CD4-positive, alpha-beta memory T cell (primary cell): ENCODE measurements at regions of chr7 and their contacts with region 1.

Region 1: DNA sequence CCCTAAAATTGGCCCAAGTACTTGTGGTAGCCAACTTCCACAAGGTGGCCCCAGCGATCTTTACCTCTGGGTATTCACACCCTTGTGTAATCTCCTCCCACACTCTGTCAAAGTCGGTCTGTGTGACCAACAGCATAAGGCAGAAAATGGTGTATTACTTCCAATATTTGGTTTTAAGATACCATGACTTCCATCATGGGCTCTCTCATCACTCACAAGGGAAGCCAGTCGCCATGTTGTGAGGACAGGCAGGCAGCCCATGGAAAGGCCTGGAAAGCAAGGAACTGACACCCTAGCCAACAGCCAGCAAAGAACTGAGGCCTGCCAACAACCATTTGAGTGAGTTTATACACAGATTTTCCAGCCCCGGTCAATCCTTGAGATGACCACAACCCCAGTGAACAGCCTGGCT is 91.0 kb upstream of the KMT2E start:
- DNase-seq: peak; percentile 63 to 79 (median 67)
- H3K4me3 ChIP-seq: no peak overlapping the region
- H3K4me3 Mint-ChIP-seq: no peak overlapping the region
- H3K27ac ChIP-seq: no peak overlapping the region
- H3K27ac Mint-ChIP-seq: peak overlapping the region in 5 of 7 donors; percentile 42 to 83 (median 62)
- H3K4me1 ChIP-seq: peaks cover 6% of the 10 kb centered on the region
- H3K4me1 Mint-ChIP-seq: peaks cover 0 to 6% (median 4%) of the 10 kb centered on the region in 4 donors
- H3K27me3 ChIP-seq: no peaks in the 10 kb centered on the region
- H3K27me3 Mint-ChIP-seq: no peaks in the 10 kb centered on the region

Region 2: GRCh38 chr7:104231054-104232046 is 691.7 kb before region 1 on chr7:
- CTCF ChIA-PET with region 1: interaction called, 28 read pairs
- POLR2A ChIA-PET with region 1: no interaction called
- intact Hi-C with region 1: no loop called
- DNase-seq: peak; percentile 33 to 37 (median 34)
- H3K4me3 ChIP-seq: no peak overlapping the region
- H3K4me3 Mint-ChIP-seq: no peak overlapping the region
- H3K27ac ChIP-seq: no peak overlapping the region
- H3K27ac Mint-ChIP-seq: no peak overlapping the region
- H3K4me1 ChIP-seq: no peaks in the 10 kb centered on the region
- H3K4me1 Mint-ChIP-seq: peaks cover 0 to 5% (median 4%) of the 10 kb centered on the region in 4 donors
- H3K27me3 ChIP-seq: no peaks in the 10 kb centered on the region
- H3K27me3 Mint-ChIP-seq: peaks cover 7 to 18% of the 10 kb centered on the region in 2 donors

Region 3: GRCh38 chr7:104883718-104884452 is 39.1 kb before region 1 on chr7:
- CTCF ChIA-PET with region 1: interaction called, 339 read pairs
- POLR2A ChIA-PET with region 1: interaction called, 3 read pairs
- intact Hi-C with region 1: loop called (anchors 1 kb)
- DNase-seq: peak; percentile 56 to 69 (median 60)
- H3K4me3 ChIP-seq: no peak overlapping the region
- H3K4me3 Mint-ChIP-seq: peak overlapping the region in 1 of 8 donors; percentile 35
- H3K27ac ChIP-seq: no peak overlapping the region
- H3K27ac Mint-ChIP-seq: peak overlapping the region in 3 of 7 donors; percentile 5 to 72 (median 23)
- H3K4me1 ChIP-seq: peaks cover 3% of the 10 kb centered on the region
- H3K4me1 Mint-ChIP-seq: peaks cover 0 to 10% (median 7%) of the 10 kb centered on the region in 4 donors
- H3K27me3 ChIP-seq: no peaks in the 10 kb centered on the region
- H3K27me3 Mint-ChIP-seq: peaks cover 0 to 3% of the 10 kb centered on the region in 2 donors

Region 4: GRCh38 chr7:105046414-105046813 is 123.4 kb after region 1 on chr7:
- CTCF ChIA-PET with region 1: interaction called, 4 read pairs
- POLR2A ChIA-PET with region 1: no interaction called
- intact Hi-C with region 1: loop called (anchors 1 kb)
- DNase-seq: no peak
- H3K4me3 ChIP-seq: no peak overlapping the region
- H3K4me3 Mint-ChIP-seq: no peak overlapping the region
- H3K27ac ChIP-seq: no peak overlapping the region
- H3K27ac Mint-ChIP-seq: peak overlapping the region in 3 of 7 donors; percentile 10 to 74 (median 70)
- H3K4me1 ChIP-seq: peaks cover 44% of the 10 kb centered on the region
- H3K4me1 Mint-ChIP-seq: peaks cover 42 to 64% (median 54%) of the 10 kb centered on the region in 4 donors
- H3K27me3 ChIP-seq: no peaks in the 10 kb centered on the region
- H3K27me3 Mint-ChIP-seq: no peaks in the 10 kb centered on the region

Region 5: GRCh38 chr7:105079348-105079747 is 156.3 kb after region 1 on chr7:
- CTCF ChIA-PET with region 1: no interaction called
- POLR2A ChIA-PET with region 1: no interaction called
- intact Hi-C with region 1: no loop called
- DNase-seq: no peak
- H3K4me3 ChIP-seq: no peak overlapping the region
- H3K4me3 Mint-ChIP-seq: no peak overlapping the region
- H3K27ac ChIP-seq: no peak overlapping the region
- H3K27ac Mint-ChIP-seq: no peak overlapping the region
- H3K4me1 ChIP-seq: no peaks in the 10 kb centered on the region
- H3K4me1 Mint-ChIP-seq: peaks cover 4 to 17% (median 8%) of the 10 kb centered on the region in 4 donors
- H3K27me3 ChIP-seq: no peaks in the 10 kb centered on the region
- H3K27me3 Mint-ChIP-seq: no peaks in the 10 kb centered on the region

Region 6: DNA sequence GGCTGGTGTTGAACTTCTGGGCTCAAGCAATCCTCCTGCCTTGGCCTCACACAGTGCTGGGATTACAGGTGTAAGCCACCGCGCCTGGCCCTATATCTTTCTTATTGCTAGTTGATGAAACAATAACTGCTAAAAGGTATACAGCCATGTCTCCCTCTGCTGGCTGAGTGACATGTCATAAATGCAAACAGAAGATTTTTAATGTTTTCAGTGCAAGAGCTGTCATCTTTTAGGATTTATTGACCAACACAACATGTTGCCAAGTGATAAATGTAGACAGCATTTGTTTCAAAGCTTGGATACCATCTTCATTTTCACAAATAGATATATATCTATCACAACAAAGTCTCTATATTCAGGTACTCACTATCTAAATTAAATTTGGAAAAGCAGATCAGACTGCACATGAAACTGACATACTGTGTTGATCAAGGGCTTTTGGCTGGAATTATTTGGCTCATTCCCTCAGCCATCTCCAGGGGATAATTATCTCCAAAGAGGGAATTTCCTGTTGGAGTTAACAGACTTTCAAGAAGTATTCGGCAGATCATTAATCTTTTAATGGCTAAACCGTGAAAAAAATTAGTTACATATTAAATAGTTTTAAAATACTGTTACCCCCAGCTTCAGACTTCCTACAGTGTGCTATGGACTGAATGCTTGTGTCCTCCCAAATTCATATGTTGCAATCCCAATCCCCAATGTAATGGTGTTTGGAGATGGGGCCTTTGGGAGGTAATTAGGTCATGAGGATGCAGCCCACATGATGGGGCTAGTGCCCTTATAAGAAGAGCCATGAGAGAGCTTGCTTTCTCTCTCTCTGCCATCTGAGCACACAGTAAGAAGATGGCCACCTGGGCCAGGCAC is 507.0 kb after region 1 on chr7:
- CTCF ChIA-PET with region 1: interaction called, 5 read pairs
- POLR2A ChIA-PET with region 1: no interaction called
- intact Hi-C with region 1: loop called (anchors 1 kb)
- DNase-seq: peak; percentile 49 to 58 (median 56)
- H3K4me3 ChIP-seq: no peak overlapping the region
- H3K4me3 Mint-ChIP-seq: no peak overlapping the region
- H3K27ac ChIP-seq: no peak overlapping the region
- H3K27ac Mint-ChIP-seq: peak overlapping the region in 2 of 7 donors; percentile 22 to 46
- H3K4me1 ChIP-seq: peaks cover 5% of the 10 kb centered on the region
- H3K4me1 Mint-ChIP-seq: peaks cover 3 to 8% (median 4%) of the 10 kb centered on the region in 4 donors
- H3K27me3 ChIP-seq: no peaks in the 10 kb centered on the region
- H3K27me3 Mint-ChIP-seq: no peaks in the 10 kb centered on the region

Region 7: GRCh38 chr7:105589356-105590077 is 666.5 kb after region 1 on chr7:
- CTCF ChIA-PET with region 1: no interaction called
- POLR2A ChIA-PET with region 1: no interaction called
- intact Hi-C with region 1: loop called (anchors 1 kb)
- DNase-seq: peak; percentile 47 to 59 (median 53)
- H3K4me3 ChIP-seq: no peak overlapping the region
- H3K4me3 Mint-ChIP-seq: peak overlapping the region in 1 of 8 donors; percentile 42
- H3K27ac ChIP-seq: no peak overlapping the region
- H3K27ac Mint-ChIP-seq: peak overlapping the region in 4 of 7 donors; percentile 14 to 78 (median 54)
- H3K4me1 ChIP-seq: peaks cover 4% of the 10 kb centered on the region
- H3K4me1 Mint-ChIP-seq: peaks cover 4 to 6% (median 5%) of the 10 kb centered on the region in 4 donors
- H3K27me3 ChIP-seq: no peaks in the 10 kb centered on the region
- H3K27me3 Mint-ChIP-seq: no peaks in the 10 kb centered on the region